B cell (primary cell): ENCODE measurements at regions of chr12 and their contacts with region 1.

Region 1: DNA sequence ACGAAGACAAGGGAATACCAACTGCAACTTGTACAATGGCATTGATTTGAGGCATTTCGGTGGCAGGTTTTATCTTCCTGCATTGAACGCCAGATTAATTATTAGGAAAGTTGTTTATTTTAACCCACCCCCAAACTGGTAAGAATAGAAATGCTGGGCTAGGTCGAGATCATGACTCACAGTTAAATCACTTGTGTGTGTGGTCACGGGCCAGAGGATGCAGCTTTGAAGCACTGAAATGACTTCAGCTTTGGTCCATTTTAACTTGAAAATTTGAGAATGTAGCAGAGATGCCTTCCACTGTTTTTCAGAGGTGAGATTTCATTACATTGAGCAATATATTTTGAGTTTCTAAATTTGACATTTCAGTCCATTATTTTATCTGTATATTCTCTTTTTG is 23.6 kb upstream of the KCNH3 start:
- DNase-seq: no peak
- ATAC-seq: no peak
- H3K4me3 ChIP-seq: no peak overlapping the region
- H3K4me3 Mint-ChIP-seq: no peak overlapping the region
- H3K27ac ChIP-seq: no peak overlapping the region
- H3K27ac Mint-ChIP-seq: no peak overlapping the region
- H3K4me1 ChIP-seq: no peaks in the 10 kb centered on the region
- H3K4me1 Mint-ChIP-seq: no peaks in the 10 kb centered on the region
- H3K27me3 ChIP-seq: no peaks in the 10 kb centered on the region
- H3K27me3 Mint-ChIP-seq: no peaks in the 10 kb centered on the region
- CTCF ChIP-seq: no peak

Region 2: GRCh38 chr12:49322708-49323523 is 192.3 kb before region 1 on chr12 and contains the start of gene TROAP:
- CTCF ChIA-PET with region 1: interaction called, 10 read pairs
- POLR2A ChIA-PET with region 1: no interaction called
- intact Hi-C with region 1: no loop called
- DNase-seq: peak; percentile 98
- ATAC-seq: peak; percentile 99
- H3K4me3 ChIP-seq: peak within 1 kb of the TSS; percentile 66 to 85 (median 70)
- H3K4me3 Mint-ChIP-seq: peak within 1 kb of the TSS; percentile 99
- H3K27ac ChIP-seq: peak within 1 kb of the TSS; percentile 40 to 74
- H3K27ac Mint-ChIP-seq: peak within 1 kb of the TSS; percentile 85
- H3K4me1 ChIP-seq: peaks cover 12 to 18% of the 10 kb centered on the region in 2 donors
- H3K4me1 Mint-ChIP-seq: peaks cover 23% of the 10 kb centered on the region
- H3K27me3 ChIP-seq: no peaks in the 10 kb centered on the region
- H3K27me3 Mint-ChIP-seq: no peaks in the 10 kb centered on the region
- CTCF ChIP-seq: no peak
- total RNA-seq, gene TROAP: 1.0 and 1.7 TPM in 2 replicates

Region 3: DNA sequence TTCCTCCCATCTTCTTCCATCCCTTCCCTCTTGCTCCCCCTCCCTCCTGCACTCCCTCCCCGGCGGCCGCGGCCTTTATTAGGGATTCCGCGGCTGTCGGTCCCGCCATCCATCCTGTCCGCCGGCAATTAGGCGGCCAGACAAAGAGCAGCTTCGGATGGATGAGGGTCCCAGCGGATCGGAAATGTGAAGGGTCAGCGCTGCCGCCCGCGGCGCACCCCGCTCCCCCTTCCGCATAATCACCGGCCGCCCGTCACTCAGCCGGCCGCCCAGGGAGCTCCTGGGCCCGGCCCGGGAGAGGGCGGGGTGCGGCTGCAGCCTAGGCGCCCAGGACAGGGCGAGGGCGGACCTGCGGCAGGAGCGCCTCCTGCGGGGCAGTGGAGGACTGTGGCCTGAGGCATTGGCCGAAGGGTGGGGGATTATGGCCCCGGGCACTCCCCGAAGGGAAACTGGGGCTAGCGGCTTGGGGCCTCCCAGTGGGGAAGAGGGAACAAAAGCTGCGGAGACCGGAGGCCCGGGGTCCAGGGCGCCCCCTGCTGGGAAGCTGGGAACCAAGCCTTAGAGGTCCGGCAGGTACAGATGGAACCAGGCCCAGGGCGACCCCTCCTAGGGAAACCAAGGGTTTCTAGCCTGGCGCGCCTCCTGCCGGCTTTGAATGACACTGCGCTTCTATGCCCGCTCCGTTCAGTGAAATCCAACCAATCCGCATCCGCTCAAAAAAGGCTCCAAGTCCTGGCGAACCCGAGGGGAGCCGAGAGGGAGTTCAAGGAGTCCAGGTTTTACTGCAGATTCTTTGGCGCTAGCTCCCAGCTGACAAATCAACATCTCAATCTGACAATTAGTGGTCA is 173.0 kb before region 1 on chr12:
- CTCF ChIA-PET with region 1: interaction called, 729 read pairs
- POLR2A ChIA-PET with region 1: no interaction called
- intact Hi-C with region 1: no loop called
- DNase-seq: peak; percentile 83
- ATAC-seq: peak; percentile 69
- H3K4me3 ChIP-seq: peak overlapping the region in 4 of 5 experiments; percentile 29 to 51 (median 44)
- H3K4me3 Mint-ChIP-seq: peak overlapping the region; percentile 86
- H3K27ac ChIP-seq: no peak overlapping the region
- H3K27ac Mint-ChIP-seq: no peak overlapping the region
- H3K4me1 ChIP-seq: peaks cover 60 to 65% of the 10 kb centered on the region in 2 donors
- H3K4me1 Mint-ChIP-seq: peaks cover 58% of the 10 kb centered on the region
- H3K27me3 ChIP-seq: peaks cover 0 to 89% (median 47%) of the 10 kb centered on the region in 4 experiments
- H3K27me3 Mint-ChIP-seq: peaks cover 53% of the 10 kb centered on the region
- CTCF ChIP-seq: peak; percentile 96

Region 4: GRCh38 chr12:49503674-49504180 is 11.5 kb before region 1 on chr12:
- CTCF ChIA-PET with region 1: interaction called, 30 read pairs
- POLR2A ChIA-PET with region 1: no interaction called
- intact Hi-C with region 1: no loop called
- DNase-seq: no peak
- ATAC-seq: no peak
- H3K4me3 ChIP-seq: no peak overlapping the region
- H3K4me3 Mint-ChIP-seq: no peak overlapping the region
- H3K27ac ChIP-seq: no peak overlapping the region
- H3K27ac Mint-ChIP-seq: no peak overlapping the region
- H3K4me1 ChIP-seq: peaks cover 0 to 2% of the 10 kb centered on the region in 2 donors
- H3K4me1 Mint-ChIP-seq: peaks cover 4% of the 10 kb centered on the region
- H3K27me3 ChIP-seq: no peaks in the 10 kb centered on the region
- H3K27me3 Mint-ChIP-seq: no peaks in the 10 kb centered on the region
- CTCF ChIP-seq: no peak

Region 5: GRCh38 chr12:49942921-49943624 is 427.8 kb after region 1 on chr12:
- CTCF ChIA-PET with region 1: no interaction called
- POLR2A ChIA-PET with region 1: no interaction called
- intact Hi-C with region 1: no loop called
- DNase-seq: no peak
- ATAC-seq: no peak
- H3K4me3 ChIP-seq: no peak overlapping the region
- H3K4me3 Mint-ChIP-seq: no peak overlapping the region
- H3K27ac ChIP-seq: no peak overlapping the region
- H3K27ac Mint-ChIP-seq: no peak overlapping the region
- H3K4me1 ChIP-seq: peaks cover 0 to 8% of the 10 kb centered on the region in 2 donors
- H3K4me1 Mint-ChIP-seq: peaks cover 15% of the 10 kb centered on the region
- H3K27me3 ChIP-seq: peaks cover 0 to 7% (median 2%) of the 10 kb centered on the region in 4 experiments
- H3K27me3 Mint-ChIP-seq: peaks cover 12% of the 10 kb centered on the region
- CTCF ChIP-seq: no peak